AG04450 (cell line): ENCODE measurements at regions of chr12 and their contacts with region 1.

Region 1: GRCh38 chr12:121494093-121494787 is 86.6 kb downstream of the KDM2B start:
- DNase-seq: peak; percentile 8
- H3K4me3 ChIP-seq: no peak overlapping the region
- H3K27ac ChIP-seq: no peak overlapping the region
- H3K27me3 ChIP-seq: no peaks in the 10 kb centered on the region
- CTCF ChIP-seq: peak; percentile 94

Region 2: GRCh38 chr12:121507245-121507644 is 13.0 kb after region 1 on chr12:
- CTCF ChIA-PET with region 1: interaction called, 14 read pairs
- POLR2A ChIA-PET with region 1: no interaction called
- DNase-seq: no peak
- H3K4me3 ChIP-seq: no peak overlapping the region
- H3K27ac ChIP-seq: no peak overlapping the region
- H3K27me3 ChIP-seq: no peaks in the 10 kb centered on the region
- CTCF ChIP-seq: no peak